Aorta (tissue), 5 donors: ENCODE measurements at regions of chr6 and their contacts with region 1.

Region 1: GRCh38 chr6:50610562-50610961 is 102.8 kb upstream of the TFAP2D start:
- DNase-seq: no peak
- ATAC-seq: no peak
- H3K4me3 ChIP-seq: no peak overlapping the region
- H3K27ac ChIP-seq: no peak overlapping the region
- H3K4me1 ChIP-seq: no peaks in the 10 kb centered on the region
- H3K27me3 ChIP-seq: no peaks in the 10 kb centered on the region

Region 2: GRCh38 chr6:50318536-50318935 is 292.0 kb before region 1 on chr6:
- intact Hi-C with region 1: no loop called
- DNase-seq: no peak
- ATAC-seq: no peak
- H3K4me3 ChIP-seq: no peak overlapping the region
- H3K27ac ChIP-seq: no peak overlapping the region
- H3K4me1 ChIP-seq: no peaks in the 10 kb centered on the region
- H3K27me3 ChIP-seq: no peaks in the 10 kb centered on the region

Region 3: GRCh38 chr6:50555982-50556381 is 54.6 kb before region 1 on chr6:
- intact Hi-C with region 1: loop called in 1 of 2 experiments (anchors 2 kb)
- DNase-seq: no peak
- ATAC-seq: no peak
- H3K4me3 ChIP-seq: no peak overlapping the region
- H3K27ac ChIP-seq: no peak overlapping the region
- H3K4me1 ChIP-seq: no peaks in the 10 kb centered on the region
- H3K27me3 ChIP-seq: no peaks in the 10 kb centered on the region